Uterus (tissue), 4 donors: ENCODE measurements at regions of chr1 and their contacts with region 1.

Region 1: GRCh38 chr1:208177656-208178055 is 66.5 kb downstream of the PLXNA2 start:
- DNase-seq: no peak
- H3K4me3 ChIP-seq: no peak overlapping the region
- H3K27ac ChIP-seq: no peak overlapping the region
- H3K4me1 ChIP-seq: peaks cover 22 to 38% of the 10 kb centered on the region in 2 donors
- H3K27me3 ChIP-seq: no peaks in the 10 kb centered on the region
- CTCF ChIP-seq: no peak
- POLR2A ChIP-seq: no peak

Region 2: DNA sequence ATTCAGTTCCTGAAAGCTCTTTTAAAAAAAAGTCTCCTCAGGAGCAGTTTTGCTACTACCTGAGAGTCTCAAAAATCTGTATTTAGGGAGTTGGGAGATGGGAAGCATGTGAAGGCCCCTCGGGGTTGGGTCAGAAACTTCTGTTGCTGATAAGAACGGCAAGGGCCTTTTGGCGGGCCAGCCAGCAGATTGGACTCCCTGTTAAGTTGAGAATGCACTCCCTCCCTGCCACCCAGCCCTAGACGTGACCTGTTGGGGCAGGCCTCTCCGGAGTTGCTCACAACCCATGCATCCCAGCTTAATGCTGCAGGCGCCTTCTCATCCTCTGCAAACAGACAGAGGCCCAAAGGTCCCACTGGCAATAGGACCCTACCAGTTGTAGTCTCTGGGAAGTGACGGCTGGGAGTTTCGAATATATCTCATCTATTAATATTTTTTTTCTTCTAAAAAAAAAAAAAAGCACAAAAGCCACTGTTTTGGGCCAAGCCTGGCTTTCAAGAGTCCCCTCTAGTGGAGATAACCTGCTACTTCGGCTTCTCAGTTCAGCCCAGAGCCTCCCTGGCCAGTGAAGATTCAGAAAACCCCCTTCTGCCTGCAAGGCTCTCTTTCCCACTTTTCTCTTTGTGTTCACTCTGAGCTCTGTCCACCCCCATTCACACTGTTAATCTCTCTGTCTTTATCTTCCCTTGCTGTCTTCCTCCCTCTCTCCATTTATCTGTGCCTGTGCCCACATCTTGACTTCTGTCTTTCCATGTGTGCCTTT is 61.2 kb after region 1 on chr1:
- intact Hi-C with region 1: loop called (anchors 10 kb)
- DNase-seq: peak in 1 of 2 donors; percentile 55
- H3K4me3 ChIP-seq: no peak overlapping the region
- H3K27ac ChIP-seq: peak overlapping the region; percentile 30 to 77
- H3K4me1 ChIP-seq: peaks cover 4 to 6% of the 10 kb centered on the region in 2 donors
- H3K27me3 ChIP-seq: no peaks in the 10 kb centered on the region
- CTCF ChIP-seq: peak; percentile 59 to 90 (median 69)
- POLR2A ChIP-seq: no peak